CD8-positive, alpha-beta T cell (primary cell): ENCODE measurements at regions of chr1 and their contacts with region 1.

Region 1: GRCh38 chr1:6359216-6360116 is 34.1 kb downstream of the ACOT7 start:
- DNase-seq: peak in 7 of 9 experiments; percentile 34 to 80 (median 63)
- ATAC-seq: peak; percentile 69
- H3K4me3 ChIP-seq: peak overlapping the region; percentile 23 to 51
- H3K4me3 Mint-ChIP-seq: peak overlapping the region; percentile 69
- H3K27ac ChIP-seq: peak overlapping the region; percentile 49 to 80
- H3K27ac Mint-ChIP-seq: peak overlapping the region; percentile 85
- H3K4me1 ChIP-seq: peaks cover 41% of the 10 kb centered on the region
- H3K4me1 Mint-ChIP-seq: peaks cover 37% of the 10 kb centered on the region
- H3K27me3 ChIP-seq: no peaks in the 10 kb centered on the region
- H3K27me3 Mint-ChIP-seq: no peaks in the 10 kb centered on the region
- CTCF ChIP-seq: no peak

Region 2: DNA sequence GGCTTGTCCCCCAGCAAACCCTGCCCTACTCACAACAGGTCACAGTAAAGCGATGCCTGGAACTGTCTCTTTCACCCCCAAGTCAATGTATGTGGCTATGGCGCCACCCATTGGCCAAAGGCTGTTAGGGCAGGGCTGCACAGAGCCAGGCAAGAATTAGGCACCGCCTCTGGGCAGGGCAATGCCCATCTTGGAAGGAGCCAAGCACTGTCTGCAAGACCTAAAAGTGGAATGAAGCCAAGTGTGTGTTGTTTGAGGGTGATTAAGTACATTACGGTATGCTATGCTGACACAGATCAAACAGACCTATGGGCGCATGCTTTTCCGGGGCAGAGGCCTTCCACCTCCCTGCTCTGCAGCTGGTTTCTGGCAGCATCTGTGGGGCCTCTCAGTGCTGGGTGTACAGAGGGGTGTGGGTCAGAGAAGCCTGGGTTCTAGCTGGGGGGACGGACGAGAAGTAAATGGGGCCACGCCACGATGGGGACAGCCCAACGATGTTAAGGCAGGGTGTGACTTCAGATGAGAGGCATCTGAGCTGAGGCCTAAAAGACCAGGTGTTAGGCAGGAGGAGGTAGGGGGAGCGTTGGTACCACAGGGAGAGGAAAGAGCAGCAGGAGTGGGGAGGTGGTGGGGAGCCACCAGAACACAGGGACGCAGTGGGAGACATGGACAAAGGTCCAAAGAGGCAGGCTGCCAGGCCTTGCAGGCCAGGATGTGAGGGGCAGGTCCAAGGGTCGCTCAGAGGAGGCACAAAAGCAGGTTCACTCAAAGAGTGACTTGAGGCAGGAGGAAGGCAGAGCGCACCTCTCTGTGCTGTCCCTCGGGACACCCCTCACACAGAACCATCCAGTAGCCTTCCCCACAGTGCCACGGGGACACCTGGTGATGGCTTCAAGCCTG is 15.7 kb before region 1 on chr1:
- CTCF ChIA-PET with region 1: interaction called, 60 read pairs
- POLR2A ChIA-PET with region 1: interaction called, 4 read pairs
- intact Hi-C with region 1: loop called in 1 of 2 experiments (anchors 1 kb)
- DNase-seq: peak; percentile 22 to 73 (median 61)
- ATAC-seq: peak; percentile 63
- H3K4me3 ChIP-seq: no peak overlapping the region
- H3K4me3 Mint-ChIP-seq: no peak overlapping the region
- H3K27ac ChIP-seq: no peak overlapping the region
- H3K27ac Mint-ChIP-seq: no peak overlapping the region
- H3K4me1 ChIP-seq: peaks cover 13% of the 10 kb centered on the region
- H3K4me1 Mint-ChIP-seq: peaks cover 10% of the 10 kb centered on the region
- H3K27me3 ChIP-seq: no peaks in the 10 kb centered on the region
- H3K27me3 Mint-ChIP-seq: no peaks in the 10 kb centered on the region
- CTCF ChIP-seq: peak; percentile 52

Region 3: GRCh38 chr1:6414443-6414844 is 55.0 kb after region 1 on chr1:
- CTCF ChIA-PET with region 1: interaction called, 10 read pairs
- POLR2A ChIA-PET with region 1: no interaction called
- intact Hi-C with region 1: no loop called
- DNase-seq: peak in 4 of 9 experiments; percentile 37 to 61 (median 46)
- ATAC-seq: peak; percentile 77
- H3K4me3 ChIP-seq: no peak overlapping the region
- H3K4me3 Mint-ChIP-seq: no peak overlapping the region
- H3K27ac ChIP-seq: no peak overlapping the region
- H3K27ac Mint-ChIP-seq: no peak overlapping the region
- H3K4me1 ChIP-seq: peaks cover 18% of the 10 kb centered on the region
- H3K4me1 Mint-ChIP-seq: peaks cover 6% of the 10 kb centered on the region
- H3K27me3 ChIP-seq: peaks cover 17 to 45% of the 10 kb centered on the region in 2 experiments
- H3K27me3 Mint-ChIP-seq: peaks cover 53% of the 10 kb centered on the region
- CTCF ChIP-seq: no peak

Region 4: GRCh38 chr1:6438047-6438525 is 78.6 kb after region 1 on chr1:
- CTCF ChIA-PET with region 1: interaction called, 13 read pairs
- POLR2A ChIA-PET with region 1: no interaction called
- intact Hi-C with region 1: loop called in 1 of 2 experiments (anchors 1 kb)
- DNase-seq: peak; percentile 54 to 82 (median 72)
- ATAC-seq: peak; percentile 75
- H3K4me3 ChIP-seq: no peak overlapping the region
- H3K4me3 Mint-ChIP-seq: no peak overlapping the region
- H3K27ac ChIP-seq: no peak overlapping the region
- H3K27ac Mint-ChIP-seq: no peak overlapping the region
- H3K4me1 ChIP-seq: peaks cover 6% of the 10 kb centered on the region
- H3K4me1 Mint-ChIP-seq: peaks cover 12% of the 10 kb centered on the region
- H3K27me3 ChIP-seq: peaks cover 0 to 8% of the 10 kb centered on the region in 2 experiments
- H3K27me3 Mint-ChIP-seq: peaks cover 26% of the 10 kb centered on the region
- CTCF ChIP-seq: peak; percentile 92